CD8-positive, alpha-beta memory T cell (primary cell): ENCODE measurements at regions of chr15 and their contacts with region 1.

Region 1: GRCh38 chr15:90320061-90320884 is 31.8 kb upstream of the ZNF774 start:
- DNase-seq: peak; percentile 46 to 78 (median 61)
- H3K4me3 ChIP-seq: no peak overlapping the region
- H3K4me3 Mint-ChIP-seq: no peak overlapping the region
- H3K27ac ChIP-seq: no peak overlapping the region
- H3K27ac Mint-ChIP-seq: no peak overlapping the region
- H3K4me1 ChIP-seq: peaks cover 6% of the 10 kb centered on the region
- H3K4me1 Mint-ChIP-seq: peaks cover 5 to 9% (median 6%) of the 10 kb centered on the region in 3 donors
- H3K27me3 ChIP-seq: no peaks in the 10 kb centered on the region
- H3K27me3 Mint-ChIP-seq: peaks cover 0 to 1% of the 10 kb centered on the region in 2 donors

Region 2: DNA sequence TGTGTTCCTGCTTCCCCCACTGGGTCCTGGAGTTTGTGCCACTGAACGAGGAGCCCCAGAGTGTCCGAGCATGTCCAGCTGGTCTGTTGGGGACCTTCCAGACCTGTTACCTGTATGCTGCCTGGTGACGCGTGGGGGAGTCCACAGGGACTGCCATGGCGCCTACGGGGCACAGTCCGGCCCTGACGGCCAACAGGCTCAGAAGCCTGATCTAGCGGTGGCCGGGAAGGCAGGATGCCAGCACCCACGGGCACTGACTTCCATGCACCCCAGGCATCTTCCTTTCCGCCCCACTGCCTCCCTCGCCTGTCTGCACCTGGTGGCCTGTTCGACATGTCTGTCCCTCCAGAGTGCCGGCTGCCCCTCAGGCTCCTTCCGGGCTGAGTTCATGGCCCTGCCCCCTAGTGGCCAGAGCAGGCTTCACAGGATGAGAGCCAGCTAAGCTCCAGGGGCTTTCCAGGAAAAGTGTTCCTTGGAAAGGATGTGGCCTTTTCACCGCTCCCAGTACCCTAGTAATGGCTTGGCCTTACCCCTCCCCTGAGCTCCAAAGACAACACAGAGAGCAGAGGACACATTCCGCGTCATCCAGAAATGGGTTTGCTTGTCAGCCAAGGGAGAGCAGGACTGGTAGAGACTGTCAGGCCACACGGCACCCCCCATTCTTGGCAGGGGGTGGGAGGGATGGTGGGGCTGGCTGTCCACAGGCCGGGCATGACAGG is 19.1 kb before region 1 on chr15:
- CTCF ChIA-PET with region 1: interaction called, 21 read pairs
- POLR2A ChIA-PET with region 1: no interaction called
- DNase-seq: peak; percentile 28 to 72 (median 46)
- H3K4me3 ChIP-seq: no peak overlapping the region
- H3K4me3 Mint-ChIP-seq: peak overlapping the region in 1 of 7 donors; percentile 69
- H3K27ac ChIP-seq: no peak overlapping the region
- H3K27ac Mint-ChIP-seq: no peak overlapping the region
- H3K4me1 ChIP-seq: peaks cover 9% of the 10 kb centered on the region
- H3K4me1 Mint-ChIP-seq: peaks cover 9 to 18% (median 14%) of the 10 kb centered on the region in 3 donors
- H3K27me3 ChIP-seq: no peaks in the 10 kb centered on the region
- H3K27me3 Mint-ChIP-seq: peaks cover 0 to under 1% of the 10 kb centered on the region in 2 donors

Region 3: GRCh38 chr15:90362936-90363212 is 42.6 kb after region 1 on chr15:
- CTCF ChIA-PET with region 1: interaction called, 21 read pairs
- POLR2A ChIA-PET with region 1: no interaction called
- DNase-seq: no peak
- H3K4me3 ChIP-seq: no peak overlapping the region
- H3K4me3 Mint-ChIP-seq: no peak overlapping the region
- H3K27ac ChIP-seq: no peak overlapping the region
- H3K27ac Mint-ChIP-seq: peak overlapping the region in 4 of 8 donors; percentile 1 to 29 (median 14)
- H3K4me1 ChIP-seq: peaks cover 9% of the 10 kb centered on the region
- H3K4me1 Mint-ChIP-seq: peaks cover 15 to 24% (median 22%) of the 10 kb centered on the region in 3 donors
- H3K27me3 ChIP-seq: no peaks in the 10 kb centered on the region
- H3K27me3 Mint-ChIP-seq: no peaks in the 10 kb centered on the region

Region 4: DNA sequence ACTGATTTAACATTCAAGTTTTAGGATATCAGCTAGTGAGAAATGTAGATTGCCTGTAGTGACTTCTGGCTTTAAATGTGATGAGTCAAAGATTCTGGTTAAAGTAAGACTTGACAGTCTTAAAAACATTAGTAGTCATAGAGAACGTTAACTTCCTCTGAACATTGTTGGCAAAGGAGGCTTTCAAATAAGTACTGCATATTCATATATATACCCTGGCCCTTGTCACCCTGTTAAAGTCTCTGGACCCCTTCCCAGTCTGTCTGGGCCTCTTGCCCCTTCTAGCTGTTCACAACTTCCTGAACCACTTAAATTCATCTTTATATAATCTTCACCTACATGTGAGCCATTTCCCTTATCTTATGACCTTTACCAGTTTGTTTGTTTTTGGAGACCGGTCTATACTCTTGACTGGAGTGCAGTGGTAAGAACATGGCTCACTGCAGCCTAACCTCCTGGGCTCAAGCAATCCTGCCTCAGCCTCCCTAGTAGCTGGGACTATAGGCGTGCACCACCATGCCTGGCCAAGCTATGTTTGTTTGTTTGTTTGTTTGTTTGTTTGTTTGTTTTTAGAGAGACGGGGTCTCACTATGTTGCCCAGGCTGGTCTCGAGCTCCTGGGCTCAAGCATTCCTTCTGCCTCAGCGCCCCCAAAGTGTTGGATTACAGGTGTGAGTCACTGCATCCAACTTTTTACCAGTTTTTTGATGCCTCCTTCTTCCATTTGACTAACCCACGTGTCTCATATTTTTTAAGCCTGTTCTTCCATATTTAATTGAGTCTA is 145.1 kb after region 1 on chr15:
- CTCF ChIA-PET with region 1: interaction called, 11 read pairs
- POLR2A ChIA-PET with region 1: no interaction called
- DNase-seq: no peak
- H3K4me3 ChIP-seq: no peak overlapping the region
- H3K4me3 Mint-ChIP-seq: no peak overlapping the region
- H3K27ac ChIP-seq: no peak overlapping the region
- H3K27ac Mint-ChIP-seq: peak overlapping the region in 5 of 8 donors; percentile 12 to 79 (median 34)
- H3K4me1 ChIP-seq: no peaks in the 10 kb centered on the region
- H3K4me1 Mint-ChIP-seq: peaks cover 21 to 28% (median 25%) of the 10 kb centered on the region in 3 donors
- H3K27me3 ChIP-seq: no peaks in the 10 kb centered on the region
- H3K27me3 Mint-ChIP-seq: no peaks in the 10 kb centered on the region

Region 5: GRCh38 chr15:91603384-91604080 is 1283.3 kb after region 1 on chr15:
- CTCF ChIA-PET with region 1: no interaction called
- POLR2A ChIA-PET with region 1: no interaction called
- DNase-seq: no peak
- H3K4me3 ChIP-seq: no peak overlapping the region
- H3K4me3 Mint-ChIP-seq: no peak overlapping the region
- H3K27ac ChIP-seq: no peak overlapping the region
- H3K27ac Mint-ChIP-seq: no peak overlapping the region
- H3K4me1 ChIP-seq: no peaks in the 10 kb centered on the region
- H3K4me1 Mint-ChIP-seq: no peaks in the 10 kb centered on the region
- H3K27me3 ChIP-seq: no peaks in the 10 kb centered on the region
- H3K27me3 Mint-ChIP-seq: peaks cover 1 to 20% of the 10 kb centered on the region in 2 donors